ENCODE measurements at regions of chr19 and their contacts with region 1.

Region 1: DNA sequence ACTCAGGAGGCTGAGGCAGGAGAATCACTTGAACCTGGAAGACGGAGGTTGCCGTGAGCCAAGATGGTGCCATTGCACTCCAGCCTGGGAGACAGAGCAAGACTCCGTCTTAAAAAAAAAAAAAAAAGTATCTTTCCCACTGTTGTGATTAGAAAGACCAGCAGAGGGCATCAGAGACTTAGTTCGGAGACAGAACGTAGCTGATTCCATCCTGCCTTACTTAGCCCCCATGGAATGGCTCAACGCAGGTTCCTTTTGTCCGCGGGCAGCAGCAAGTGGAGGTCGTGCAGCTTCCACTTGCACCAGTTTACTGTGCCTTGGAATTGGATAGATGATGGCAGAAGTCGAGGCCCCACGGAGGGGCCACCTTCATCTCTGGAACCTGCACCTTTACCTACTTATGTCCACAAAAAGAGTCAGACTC is 8.1 kb downstream of the TIMM29 start:
- DNase-seq: peak; percentile 84
- H3K4me3 Mint-ChIP-seq: no peak overlapping the region
- H3K27ac Mint-ChIP-seq: no peak overlapping the region
- H3K4me1 Mint-ChIP-seq: no peaks in the 10 kb centered on the region
- H3K27me3 Mint-ChIP-seq: no peaks in the 10 kb centered on the region
- CTCF ChIP-seq: peak; percentile 55

Region 2: DNA sequence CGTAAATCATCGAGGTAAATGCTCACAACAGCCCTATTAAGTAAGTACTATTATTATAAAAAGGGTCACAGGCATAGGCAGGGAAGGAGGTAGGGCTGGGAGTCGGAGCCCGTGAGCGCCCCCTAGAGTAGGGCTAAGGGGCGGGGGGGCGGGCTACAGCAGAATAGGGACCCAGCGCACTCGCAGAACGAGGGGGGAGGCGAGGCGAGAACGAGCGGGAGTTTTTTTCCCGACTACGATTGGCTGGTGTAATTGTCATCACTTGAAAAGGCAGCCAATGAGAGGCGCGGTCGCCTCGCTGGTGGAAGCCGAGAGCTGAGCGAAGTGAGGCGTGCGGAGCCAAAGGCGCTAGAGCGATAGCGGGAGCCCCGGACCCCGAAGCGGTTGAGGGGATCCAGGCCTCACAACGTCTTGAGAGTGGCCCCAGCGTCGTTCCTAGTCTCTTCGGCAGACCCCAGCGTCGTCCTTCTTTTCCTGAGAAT is 457.7 kb before region 1 on chr19:
- CTCF ChIA-PET with region 1: no interaction called
- POLR2A ChIA-PET with region 1: no interaction called
- intact Hi-C with region 1: no loop called
- DNase-seq: peak; percentile 17
- H3K4me3 Mint-ChIP-seq: no peak overlapping the region
- H3K27ac Mint-ChIP-seq: no peak overlapping the region
- H3K4me1 Mint-ChIP-seq: peaks cover 6% of the 10 kb centered on the region
- H3K27me3 Mint-ChIP-seq: no peaks in the 10 kb centered on the region
- CTCF ChIP-seq: peak; percentile 30

Region 3: GRCh38 chr19:10884274-10884673 is 52.4 kb before region 1 on chr19:
- CTCF ChIA-PET with region 1: no interaction called
- POLR2A ChIA-PET with region 1: no interaction called
- intact Hi-C with region 1: no loop called
- DNase-seq: no peak
- H3K4me3 Mint-ChIP-seq: no peak overlapping the region
- H3K27ac Mint-ChIP-seq: no peak overlapping the region
- H3K4me1 Mint-ChIP-seq: peaks cover 14% of the 10 kb centered on the region
- H3K27me3 Mint-ChIP-seq: no peaks in the 10 kb centered on the region
- CTCF ChIP-seq: no peak

Region 4: DNA sequence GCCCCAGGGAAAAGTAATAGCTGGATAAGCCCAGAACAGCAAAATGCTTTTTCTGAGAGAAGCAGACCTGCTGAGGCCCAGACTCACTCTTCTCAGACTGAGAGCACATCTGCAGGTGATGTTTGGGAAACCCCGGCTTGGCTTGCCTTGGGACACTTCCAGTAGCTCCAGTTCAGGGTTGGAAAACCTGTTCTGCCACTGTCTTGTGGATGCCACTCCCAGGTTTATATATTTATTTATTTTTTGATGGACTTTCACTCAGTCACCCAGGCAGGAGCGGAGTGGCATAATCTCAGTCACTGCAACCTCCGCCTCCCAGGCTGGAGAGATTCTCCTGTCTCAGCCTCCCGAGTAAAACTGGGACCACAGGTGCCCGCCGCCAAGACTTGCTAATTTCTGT is 16.1 kb after region 1 on chr19:
- CTCF ChIA-PET with region 1: interaction called, 54 read pairs
- POLR2A ChIA-PET with region 1: interaction called, 5 read pairs
- intact Hi-C with region 1: no loop called
- DNase-seq: no peak
- H3K4me3 Mint-ChIP-seq: no peak overlapping the region
- H3K27ac Mint-ChIP-seq: no peak overlapping the region
- H3K4me1 Mint-ChIP-seq: peaks cover 6% of the 10 kb centered on the region
- H3K27me3 Mint-ChIP-seq: no peaks in the 10 kb centered on the region
- CTCF ChIP-seq: no peak

Region 5: GRCh38 chr19:11197264-11198174 is 260.8 kb after region 1 on chr19 and contains the start of gene KANK2:
- CTCF ChIA-PET with region 1: no interaction called
- POLR2A ChIA-PET with region 1: no interaction called
- intact Hi-C with region 1: loop called (anchors 5 kb)
- DNase-seq: peak; percentile 84
- H3K4me3 Mint-ChIP-seq: peak within 1 kb of the TSS; percentile 84
- H3K27ac Mint-ChIP-seq: peak within 1 kb of the TSS; percentile 49
- H3K4me1 Mint-ChIP-seq: peaks cover 11% of the 10 kb centered on the region
- H3K27me3 Mint-ChIP-seq: no peaks in the 10 kb centered on the region
- CTCF ChIP-seq: no peak
- total RNA-seq, gene KANK2: 25.0 and 29.2 TPM in 2 replicates

Measured in MCF 10A (cell line).